ENCODE measurements at regions of chr9 and their contacts with region 1.

Region 1: DNA sequence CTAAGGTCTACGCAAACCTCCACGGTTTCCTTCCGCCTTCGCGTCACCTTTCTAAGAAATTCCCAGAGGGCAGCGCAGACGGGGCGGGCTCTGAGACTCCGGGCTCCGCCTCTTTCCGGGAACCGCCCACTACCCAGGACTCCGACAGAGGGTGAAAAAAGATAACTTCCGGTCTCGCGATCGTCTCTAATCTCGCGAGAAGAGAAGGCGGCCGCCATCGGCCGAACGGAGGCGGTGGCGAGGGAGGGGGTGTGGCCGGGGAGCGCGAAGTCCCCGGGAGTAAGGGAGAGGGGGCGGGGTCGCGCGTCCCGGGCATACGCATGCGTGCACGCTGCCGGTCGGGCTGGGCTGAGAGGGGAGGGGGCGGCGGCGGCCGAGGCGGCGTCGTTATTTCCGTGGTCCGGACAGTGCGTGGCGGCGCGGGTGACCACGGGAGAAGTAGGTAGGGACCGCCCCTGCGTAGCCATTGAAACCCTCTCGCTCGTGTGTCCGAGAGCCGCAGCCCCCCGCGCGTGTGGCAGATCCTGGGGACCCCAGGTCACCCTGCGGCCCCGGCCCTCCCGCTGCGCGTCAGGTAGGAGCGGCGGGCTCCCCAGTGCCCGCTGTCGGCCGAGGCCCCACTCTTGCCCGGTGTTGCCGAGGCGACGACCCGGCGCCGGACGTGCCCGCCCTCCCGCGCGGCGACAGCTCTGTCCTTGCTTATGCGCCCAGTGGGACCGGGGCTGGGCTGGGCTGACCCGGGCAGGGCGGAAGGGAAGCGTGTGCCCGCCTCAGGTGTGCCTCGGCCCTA is at the start of gene NAA35:
- DNase-seq: peak; percentile 99
- H3K4me3 ChIP-seq: peak within 1 kb of the TSS; percentile 68 to 94 (median 91)
- H3K27ac ChIP-seq: peak within 1 kb of the TSS; percentile 83
- H3K4me1 ChIP-seq: peaks cover 13% of the 10 kb centered on the region
- H3K27me3 ChIP-seq: no peaks in the 10 kb centered on the region
- CTCF ChIP-seq: no peak
- POLR2A ChIP-seq: no peak
- total RNA-seq, gene NAA35: 22.5 and 23.3 TPM in 2 replicates

Region 2: DNA sequence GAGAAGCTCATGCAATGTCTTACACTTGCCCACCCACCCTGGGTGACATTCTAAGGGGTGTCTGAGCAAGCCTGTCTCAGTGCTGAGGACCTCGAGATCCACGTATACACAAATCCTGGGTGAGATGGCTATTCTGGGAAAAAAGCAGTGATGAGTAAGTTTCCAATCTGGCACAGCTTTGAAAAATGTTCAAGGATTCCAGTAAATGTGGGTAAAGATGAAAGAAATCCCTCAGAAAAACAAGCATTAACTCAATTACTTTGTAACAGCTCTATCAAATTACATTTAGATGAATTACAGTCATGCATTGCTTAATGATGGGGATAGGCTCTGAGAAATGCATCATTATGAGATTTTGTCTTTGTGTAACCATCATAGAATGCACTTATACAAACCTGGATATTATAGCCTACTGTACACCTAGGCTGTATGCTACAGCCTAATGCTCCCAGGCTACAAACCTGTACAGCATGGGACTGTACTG is 131.4 kb after region 1 on chr9:
- CTCF ChIA-PET with region 1: no interaction called
- POLR2A ChIA-PET with region 1: no interaction called
- dilution Hi-C with region 1: no loop called
- intact Hi-C with region 1: no loop called
- DNase-seq: no peak
- H3K4me3 ChIP-seq: no peak overlapping the region
- H3K27ac ChIP-seq: no peak overlapping the region
- H3K4me1 ChIP-seq: no peaks in the 10 kb centered on the region
- H3K27me3 ChIP-seq: no peaks in the 10 kb centered on the region
- CTCF ChIP-seq: no peak
- POLR2A ChIP-seq: no peak

Region 3: DNA sequence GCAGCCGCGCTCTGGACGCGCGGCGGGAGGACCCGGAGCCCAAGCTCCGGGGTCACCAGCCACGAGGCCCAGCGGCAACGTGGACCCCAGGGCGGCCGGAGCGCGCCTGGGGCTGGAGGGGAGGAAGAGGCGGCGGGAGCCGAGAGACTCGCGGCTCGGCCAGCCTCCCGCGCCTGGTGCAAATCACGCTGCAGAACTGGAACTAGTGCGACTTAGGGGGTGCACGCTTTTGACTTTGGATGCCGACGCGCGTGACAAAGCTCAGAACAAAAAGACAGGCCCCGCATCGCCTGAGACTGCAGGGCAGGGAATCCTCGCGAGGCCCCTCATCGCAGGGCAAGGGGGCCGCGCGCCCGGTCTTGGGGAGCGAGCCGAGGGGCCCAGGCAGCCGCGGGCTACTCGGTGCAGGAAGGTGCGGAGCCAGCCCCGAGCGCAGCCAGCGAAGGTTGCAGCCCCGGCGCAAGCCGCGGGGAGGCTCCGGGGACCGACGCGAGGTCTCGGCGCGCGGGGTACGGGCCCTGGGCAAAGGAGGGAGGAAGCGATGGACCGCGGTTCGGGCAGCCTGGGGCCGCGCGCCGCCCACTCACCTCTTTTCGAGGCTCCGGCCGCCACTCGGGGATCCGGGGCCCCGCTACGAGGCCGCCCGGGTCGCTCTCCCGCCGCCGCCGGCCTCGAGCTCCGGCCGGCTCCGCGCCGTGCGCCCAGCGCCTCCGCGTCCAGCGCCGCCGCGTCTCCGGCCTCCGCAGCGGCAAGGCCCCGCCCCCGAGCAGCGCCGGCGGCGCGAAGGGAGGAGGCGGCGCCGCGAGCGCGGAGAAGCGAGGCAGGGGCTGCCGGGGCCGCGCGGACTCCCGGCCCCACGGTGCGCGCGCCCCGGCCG is 158.0 kb after region 1 on chr9 and contains the start of gene GOLM1:
- CTCF ChIA-PET with region 1: no interaction called
- POLR2A ChIA-PET with region 1: no interaction called
- dilution Hi-C with region 1: no loop called
- intact Hi-C with region 1: loop called (anchors 1 kb)
- DNase-seq: peak; percentile 58
- H3K4me3 ChIP-seq: peak within 1 kb of the TSS; percentile 63 to 88 (median 69)
- H3K27ac ChIP-seq: peak within 1 kb of the TSS; percentile 65
- H3K4me1 ChIP-seq: peaks cover 20% of the 10 kb centered on the region
- H3K27me3 ChIP-seq: no peaks in the 10 kb centered on the region
- CTCF ChIP-seq: peak in 1 of 2 donors; percentile 26
- POLR2A ChIP-seq: peak; percentile 43
- total RNA-seq, gene GOLM1: 94.9 and 108 TPM in 2 replicates

Region 4: DNA sequence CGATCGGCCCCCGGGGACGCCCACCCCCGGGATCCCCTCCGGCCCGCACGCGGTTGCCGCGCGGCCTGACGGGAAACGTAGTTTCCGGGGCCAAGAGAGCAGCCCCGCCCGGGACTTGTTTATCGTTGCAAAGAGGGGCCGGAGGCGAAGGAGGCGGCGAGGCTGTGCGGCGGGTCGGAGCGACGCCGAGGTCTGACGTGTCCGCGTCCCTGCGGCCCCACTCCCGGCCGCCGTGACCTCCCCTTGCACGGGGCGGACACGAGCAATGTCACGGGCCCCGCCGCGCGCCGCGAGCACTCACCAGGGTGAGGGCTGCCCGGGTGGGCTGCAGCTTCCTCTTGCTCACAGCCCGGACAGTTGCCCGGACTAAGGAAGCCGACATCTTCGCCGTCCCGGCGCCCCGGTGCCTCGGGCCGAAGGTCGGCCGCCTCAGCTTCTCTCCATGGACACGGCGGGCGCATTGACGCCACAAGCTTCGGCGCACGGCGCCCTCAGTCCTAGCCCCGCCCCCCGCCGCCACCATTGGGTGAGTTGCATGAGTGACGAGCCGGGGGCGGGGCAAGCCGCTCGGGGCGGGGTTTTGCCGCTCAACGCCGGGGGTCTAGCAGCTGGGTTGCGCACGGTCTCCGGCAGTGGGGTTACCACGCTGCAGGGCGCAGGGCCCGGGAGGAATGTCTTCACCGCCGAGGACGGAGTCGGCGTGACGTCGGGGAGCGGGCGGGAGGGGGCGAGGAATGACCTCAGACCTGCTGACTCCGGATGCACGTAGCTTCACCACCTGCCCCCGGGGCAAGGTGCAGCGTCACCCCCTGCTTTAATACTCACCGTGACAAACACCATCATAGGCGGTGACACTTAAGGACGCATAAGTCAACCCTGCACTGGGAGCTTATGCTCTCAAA is 341.3 kb after region 1 on chr9 and contains the start of gene ISCA1:
- CTCF ChIA-PET with region 1: no interaction called
- POLR2A ChIA-PET with region 1: no interaction called
- dilution Hi-C with region 1: no loop called
- intact Hi-C with region 1: loop called (anchors 5 kb)
- DNase-seq: peak; percentile 90
- H3K4me3 ChIP-seq: peak within 1 kb of the TSS; percentile 47 to 84 (median 76)
- H3K27ac ChIP-seq: peak within 1 kb of the TSS; percentile 88
- H3K4me1 ChIP-seq: peaks cover 11% of the 10 kb centered on the region
- H3K27me3 ChIP-seq: no peaks in the 10 kb centered on the region
- CTCF ChIP-seq: no peak
- POLR2A ChIP-seq: peak; percentile 83
- total RNA-seq, gene ISCA1: 20.6 and 22.2 TPM in 2 replicates

Region 5: DNA sequence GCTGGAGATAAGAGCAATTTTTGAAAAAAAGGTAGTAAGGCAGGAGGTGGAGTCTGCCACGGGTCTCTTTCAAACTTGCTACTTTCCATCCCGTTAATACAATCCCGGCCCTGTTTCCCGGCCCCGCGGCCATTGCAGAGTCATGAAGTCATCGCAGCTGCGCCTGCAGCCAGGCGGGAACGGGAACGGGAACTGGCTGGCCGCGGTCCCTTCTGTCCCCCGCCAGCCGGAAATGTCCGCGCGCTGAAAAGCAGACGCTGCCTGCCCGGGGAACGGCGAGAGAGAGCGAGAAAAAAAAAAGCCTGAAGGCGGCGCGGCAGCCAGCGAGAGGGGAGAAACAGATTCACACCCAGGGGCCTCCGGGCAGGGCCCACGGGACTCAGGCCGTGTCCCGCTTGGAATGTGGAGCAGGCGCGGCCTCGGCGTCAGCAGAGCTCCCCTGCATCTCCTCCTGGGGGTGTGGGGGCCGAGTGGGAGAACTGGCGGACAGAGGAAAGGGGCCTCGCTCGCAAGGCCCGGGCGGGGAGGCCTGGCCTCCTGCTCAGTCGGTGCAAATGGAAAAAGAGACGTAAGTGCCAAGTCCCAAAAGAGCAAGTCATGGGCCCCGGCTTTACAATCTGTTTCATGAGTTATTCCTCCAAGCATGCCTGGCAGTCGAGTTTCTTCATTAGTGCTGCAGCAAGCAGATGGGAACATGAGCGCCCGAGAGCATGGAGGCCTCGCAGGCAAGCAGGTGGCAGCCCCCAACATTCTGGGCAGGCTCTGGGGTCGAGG is 1207.5 kb after region 1 on chr9:
- CTCF ChIA-PET with region 1: no interaction called
- POLR2A ChIA-PET with region 1: no interaction called
- dilution Hi-C with region 1: no loop called
- intact Hi-C with region 1: loop called (anchors 5 kb)
- DNase-seq: peak; percentile 69
- H3K4me3 ChIP-seq: peak overlapping the region in 2 of 3 experiments; percentile 6 to 9
- H3K27ac ChIP-seq: no peak overlapping the region
- H3K4me1 ChIP-seq: peaks cover 3% of the 10 kb centered on the region
- H3K27me3 ChIP-seq: no peaks in the 10 kb centered on the region
- CTCF ChIP-seq: no peak
- POLR2A ChIP-seq: no peak